ENCODE measurements at regions of chr14 and their contacts with region 1.

Region 1: GRCh38 chr14:100317912-100318808 is 5.0 kb upstream of the SLC25A47 start:
- DNase-seq: no peak
- H3K4me3 ChIP-seq: peak overlapping the region; percentile 1; the same call in 1 of the 2 replicates
- CTCF ChIP-seq: peak; percentile 87

Region 2: GRCh38 chr14:100203949-100204834 is 114.0 kb before region 1 on chr14:
- CTCF ChIA-PET with region 1: no interaction called
- POLR2A ChIA-PET with region 1: no interaction called
- DNase-seq: no peak
- H3K4me3 ChIP-seq: no peak overlapping the region
- CTCF ChIP-seq: no peak

Region 3: GRCh38 chr14:100305324-100306100 is 12.6 kb before region 1 on chr14:
- CTCF ChIA-PET with region 1: interaction called, 15 read pairs
- POLR2A ChIA-PET with region 1: no interaction called
- DNase-seq: no peak
- H3K4me3 ChIP-seq: peak overlapping the region; percentile 72
- CTCF ChIP-seq: no peak

Region 4: DNA sequence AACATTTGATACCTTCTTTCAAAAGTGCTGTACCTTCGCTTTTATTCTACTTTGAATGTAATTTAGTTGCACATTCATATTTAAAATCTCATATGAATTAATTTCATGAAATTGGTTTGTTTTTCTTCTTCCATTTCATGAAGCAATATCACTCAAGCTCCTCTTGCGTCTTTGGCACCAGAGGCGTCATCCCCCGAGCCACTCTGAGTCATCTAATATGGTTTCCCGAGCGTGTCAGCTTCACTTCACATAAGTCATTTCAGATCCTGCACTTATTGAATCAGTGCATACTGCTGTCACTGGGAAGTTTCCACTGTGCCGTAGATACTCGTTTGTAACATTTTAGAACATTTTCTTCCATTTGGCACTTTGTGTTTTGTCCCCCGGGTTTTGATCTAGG is 110.6 kb after region 1 on chr14:
- CTCF ChIA-PET with region 1: no interaction called
- POLR2A ChIA-PET with region 1: no interaction called
- DNase-seq: peak; percentile 46
- H3K4me3 ChIP-seq: no peak overlapping the region
- CTCF ChIP-seq: no peak